OCI-LY7 (cell line): ENCODE measurements at regions of chr2 and their contacts with region 1.

Region 1: GRCh38 chr2:11031876-11032275 is 120.1 kb downstream of the KCNF1 start:
- DNase-seq: no peak
- H3K4me3 ChIP-seq: no peak overlapping the region
- H3K27ac ChIP-seq: no peak overlapping the region
- H3K4me1 ChIP-seq: no peaks in the 10 kb centered on the region
- CTCF ChIP-seq: no peak

Region 2: DNA sequence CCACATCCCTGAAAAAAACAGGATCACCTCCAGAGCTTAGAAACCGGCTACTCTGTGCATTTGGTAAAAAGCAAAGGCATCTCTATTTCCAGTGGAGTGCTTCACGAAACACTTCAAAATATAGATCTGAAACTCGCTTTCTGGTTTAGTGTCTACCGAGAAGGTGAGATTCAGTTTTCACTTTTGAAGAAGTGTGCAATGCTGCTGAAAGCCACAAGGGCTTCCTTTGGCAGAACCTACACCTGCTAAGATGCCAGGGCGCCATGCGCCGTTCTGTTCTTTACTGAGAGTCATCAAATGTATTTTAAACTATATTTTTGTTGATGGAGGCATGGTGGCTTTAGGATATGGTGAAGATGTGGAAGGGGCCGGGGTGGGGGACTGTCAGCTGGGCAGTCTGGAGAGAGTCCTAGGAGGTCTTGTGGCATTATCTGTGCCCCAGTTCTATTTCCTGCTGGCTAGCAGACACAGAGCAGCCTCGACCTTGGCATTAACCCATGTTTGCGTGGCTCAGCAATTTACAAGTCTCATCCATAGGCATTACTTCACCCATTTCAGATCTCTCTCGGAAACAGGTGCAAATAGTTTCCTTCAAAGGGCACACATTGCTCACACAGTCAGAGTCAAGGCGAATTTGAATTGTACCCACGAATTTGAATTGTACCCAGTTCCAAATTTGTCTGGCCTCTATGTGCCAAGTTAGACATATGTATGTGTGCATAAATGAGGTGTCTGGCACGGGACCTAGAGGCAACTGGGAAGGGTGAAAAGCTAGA is 166.8 kb before region 1 on chr2:
- CTCF ChIA-PET with region 1: no interaction called
- POLR2A ChIA-PET with region 1: interaction called, 11 read pairs
- intact Hi-C with region 1: no loop called
- DNase-seq: peak; percentile 22
- H3K4me3 ChIP-seq: no peak overlapping the region
- H3K27ac ChIP-seq: no peak overlapping the region
- H3K4me1 ChIP-seq: no peaks in the 10 kb centered on the region
- CTCF ChIP-seq: peak; percentile 49

Region 3: GRCh38 chr2:10935953-10936942 is 95.6 kb before region 1 on chr2:
- CTCF ChIA-PET with region 1: no interaction called
- POLR2A ChIA-PET with region 1: no interaction called
- intact Hi-C with region 1: no loop called
- DNase-seq: no peak
- H3K4me3 ChIP-seq: no peak overlapping the region
- H3K27ac ChIP-seq: no peak overlapping the region
- H3K4me1 ChIP-seq: peaks cover 7% of the 10 kb centered on the region
- CTCF ChIP-seq: no peak

Region 4: DNA sequence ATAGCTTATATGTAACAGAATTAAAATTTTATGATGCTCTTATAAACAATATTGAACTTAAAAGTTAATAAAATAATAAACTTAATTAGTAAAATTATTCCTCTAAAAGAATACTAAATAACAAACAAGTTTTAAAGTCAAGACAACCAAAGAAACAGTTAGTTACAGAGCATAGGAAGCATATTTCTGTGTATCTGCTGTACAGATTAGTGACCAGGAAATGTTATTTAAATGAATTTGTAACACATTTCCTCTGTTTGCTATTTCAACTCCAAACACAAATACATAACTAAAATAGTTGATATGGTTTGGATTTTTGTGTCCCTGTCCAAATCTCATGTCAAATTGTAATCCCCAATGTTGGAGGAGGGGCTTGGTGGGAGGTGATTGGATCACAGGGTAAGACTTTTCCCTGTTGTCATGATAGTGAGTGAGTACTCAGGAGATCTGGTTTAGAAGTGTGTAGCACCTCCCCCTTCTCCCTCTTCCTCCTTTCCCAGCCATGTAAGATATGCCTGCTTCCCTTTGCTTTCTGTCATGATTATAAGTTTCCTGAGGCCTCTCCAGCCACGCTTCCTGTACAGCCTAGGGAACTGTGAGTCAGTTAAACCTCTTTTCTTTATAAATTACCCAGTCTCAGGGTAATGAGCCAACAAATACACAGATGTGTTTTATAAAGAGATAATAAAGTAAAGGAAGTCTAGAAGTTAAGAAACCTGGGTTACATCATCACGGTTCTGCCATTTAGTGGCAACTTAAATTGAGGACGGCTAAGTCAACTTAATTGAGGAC is 260.8 kb after region 1 on chr2:
- CTCF ChIA-PET with region 1: no interaction called
- POLR2A ChIA-PET with region 1: no interaction called
- intact Hi-C with region 1: no loop called
- DNase-seq: no peak
- H3K4me3 ChIP-seq: no peak overlapping the region
- H3K27ac ChIP-seq: no peak overlapping the region
- H3K4me1 ChIP-seq: peaks cover 11% of the 10 kb centered on the region
- CTCF ChIP-seq: no peak